ENCODE measurements at regions of chr2 and their contacts with region 1.

Region 1: DNA sequence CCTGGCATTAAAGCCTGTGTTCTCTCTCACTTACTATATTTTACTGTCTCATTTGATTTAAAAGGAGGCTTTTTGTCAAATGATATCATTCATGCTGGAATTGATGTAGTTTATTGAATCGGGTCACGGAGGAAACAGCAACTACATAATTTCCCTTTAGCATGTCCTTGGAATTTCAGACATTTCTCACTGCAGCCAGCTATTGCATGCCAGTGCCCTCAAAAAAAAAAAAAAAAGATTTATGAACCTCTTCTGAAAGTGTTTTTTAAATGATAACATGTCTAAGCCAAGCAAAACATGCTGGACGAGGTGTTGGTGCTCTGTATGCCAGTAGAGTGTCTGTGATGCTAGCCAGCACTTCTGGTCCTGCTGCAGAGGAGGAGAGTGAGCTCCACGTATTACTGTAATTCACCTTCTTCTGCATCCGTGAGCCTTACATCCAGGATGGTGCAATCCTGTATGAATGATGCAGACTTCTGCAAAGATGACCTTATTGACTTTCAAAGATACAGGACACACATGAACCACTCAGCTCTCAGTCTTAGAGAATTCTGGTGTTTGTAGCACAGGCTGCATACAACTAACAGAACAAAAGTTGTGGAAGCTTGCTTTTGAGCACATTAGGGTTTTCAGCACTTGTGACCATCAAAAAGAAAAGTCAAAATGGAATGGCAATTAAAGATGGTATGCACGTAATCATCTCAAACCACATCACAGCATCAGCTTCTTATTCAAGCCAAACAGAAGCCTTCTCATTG is 31.1 kb downstream of the UGP2 start:
- DNase-seq: no peak
- H3K4me3 ChIP-seq: no peak overlapping the region
- H3K27ac ChIP-seq: no peak overlapping the region
- H3K4me1 ChIP-seq: peaks cover 0 to 5% (median 0%) of the 10 kb centered on the region in 4 donors
- H3K27me3 ChIP-seq: no peaks in the 10 kb centered on the region
- CTCF ChIP-seq: no peak
- EP300 ChIP-seq: no peak
- POLR2A ChIP-seq: no peak

Region 2: GRCh38 chr2:63692002-63692606 is 180.6 kb before region 1 on chr2:
- in situ Hi-C with region 1: loop called in 2 of 4 experiments (anchors 10 to 25 kb)
- intact Hi-C with region 1: loop called (anchors 5 kb)
- DNase-seq: no peak
- H3K4me3 ChIP-seq: no peak overlapping the region
- H3K27ac ChIP-seq: no peak overlapping the region
- H3K4me1 ChIP-seq: no peaks in the 10 kb centered on the region
- H3K27me3 ChIP-seq: no peaks in the 10 kb centered on the region
- CTCF ChIP-seq: peak; percentile 46 to 69 (median 58)
- EP300 ChIP-seq: no peak
- POLR2A ChIP-seq: no peak

Region 3: GRCh38 chr2:63819765-63820717 is 52.7 kb before region 1 on chr2:
- in situ Hi-C with region 1: no loop called
- intact Hi-C with region 1: no loop called
- DNase-seq: no peak
- H3K4me3 ChIP-seq: no peak overlapping the region
- H3K27ac ChIP-seq: peak overlapping the region in 2 of 4 donors; percentile 41
- H3K4me1 ChIP-seq: peaks cover 0 to 3% (median 0%) of the 10 kb centered on the region in 4 donors
- H3K27me3 ChIP-seq: no peaks in the 10 kb centered on the region
- CTCF ChIP-seq: no peak
- EP300 ChIP-seq: no peak
- POLR2A ChIP-seq: no peak

Region 4: GRCh38 chr2:63903003-63903402 is 30.3 kb after region 1 on chr2:
- in situ Hi-C with region 1: no loop called
- intact Hi-C with region 1: no loop called
- DNase-seq: no peak
- H3K4me3 ChIP-seq: no peak overlapping the region
- H3K27ac ChIP-seq: no peak overlapping the region
- H3K4me1 ChIP-seq: no peaks in the 10 kb centered on the region
- H3K27me3 ChIP-seq: no peaks in the 10 kb centered on the region
- CTCF ChIP-seq: no peak
- EP300 ChIP-seq: no peak
- POLR2A ChIP-seq: no peak

Measured in transverse colon (tissue), 4 donors.